Caco-2 (cell line): ENCODE measurements at regions of chr10 and their contacts with region 1.

Region 1: GRCh38 chr10:18607503-18608378 is 43.6 kb downstream of the NSUN6 start:
- DNase-seq: no peak
- H3K4me3 ChIP-seq: no peak overlapping the region
- H3K4me3 Mint-ChIP-seq: no peak overlapping the region
- H3K27ac Mint-ChIP-seq: no peak overlapping the region
- H3K4me1 ChIP-seq: peaks cover 47% of the 10 kb centered on the region
- H3K4me1 Mint-ChIP-seq: peaks cover 54% of the 10 kb centered on the region
- H3K27me3 ChIP-seq: no peaks in the 10 kb centered on the region
- H3K27me3 Mint-ChIP-seq: no peaks in the 10 kb centered on the region
- CTCF ChIP-seq: no peak

Region 2: GRCh38 chr10:18576586-18576985 is 31.2 kb before region 1 on chr10:
- CTCF ChIA-PET with region 1: no interaction called
- POLR2A ChIA-PET with region 1: no interaction called
- intact Hi-C with region 1: no loop called
- DNase-seq: no peak
- H3K4me3 ChIP-seq: no peak overlapping the region
- H3K4me3 Mint-ChIP-seq: no peak overlapping the region
- H3K27ac Mint-ChIP-seq: no peak overlapping the region
- H3K4me1 ChIP-seq: no peaks in the 10 kb centered on the region
- H3K4me1 Mint-ChIP-seq: no peaks in the 10 kb centered on the region
- H3K27me3 ChIP-seq: no peaks in the 10 kb centered on the region
- H3K27me3 Mint-ChIP-seq: no peaks in the 10 kb centered on the region
- CTCF ChIP-seq: no peak

Region 3: DNA sequence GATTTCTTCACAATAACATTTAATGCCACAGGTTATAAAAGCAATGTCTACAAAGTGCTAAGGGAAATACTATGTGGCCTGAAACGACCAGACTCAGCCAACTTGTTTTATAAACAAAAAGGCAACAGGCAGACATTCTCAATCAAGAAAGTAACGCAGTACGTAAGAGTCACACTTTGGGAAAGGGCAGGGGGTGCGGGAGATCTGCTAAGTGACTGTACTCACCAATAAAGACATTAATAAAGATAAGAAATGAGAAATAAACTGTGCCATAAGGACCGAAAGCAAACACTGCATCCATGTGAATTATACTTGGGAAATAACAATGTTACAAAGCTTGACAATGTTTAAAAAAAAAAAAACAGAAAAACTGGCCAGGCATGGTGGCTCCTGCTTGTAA is 18.1 kb after region 1 on chr10:
- CTCF ChIA-PET with region 1: no interaction called
- POLR2A ChIA-PET with region 1: no interaction called
- intact Hi-C with region 1: loop called (anchors 1 kb)
- DNase-seq: no peak
- H3K4me3 ChIP-seq: no peak overlapping the region
- H3K4me3 Mint-ChIP-seq: peak overlapping the region; percentile 54
- H3K27ac Mint-ChIP-seq: peak overlapping the region; percentile 57
- H3K4me1 ChIP-seq: peaks cover 52% of the 10 kb centered on the region
- H3K4me1 Mint-ChIP-seq: peaks cover 64% of the 10 kb centered on the region
- H3K27me3 ChIP-seq: no peaks in the 10 kb centered on the region
- H3K27me3 Mint-ChIP-seq: no peaks in the 10 kb centered on the region
- CTCF ChIP-seq: no peak

Region 4: DNA sequence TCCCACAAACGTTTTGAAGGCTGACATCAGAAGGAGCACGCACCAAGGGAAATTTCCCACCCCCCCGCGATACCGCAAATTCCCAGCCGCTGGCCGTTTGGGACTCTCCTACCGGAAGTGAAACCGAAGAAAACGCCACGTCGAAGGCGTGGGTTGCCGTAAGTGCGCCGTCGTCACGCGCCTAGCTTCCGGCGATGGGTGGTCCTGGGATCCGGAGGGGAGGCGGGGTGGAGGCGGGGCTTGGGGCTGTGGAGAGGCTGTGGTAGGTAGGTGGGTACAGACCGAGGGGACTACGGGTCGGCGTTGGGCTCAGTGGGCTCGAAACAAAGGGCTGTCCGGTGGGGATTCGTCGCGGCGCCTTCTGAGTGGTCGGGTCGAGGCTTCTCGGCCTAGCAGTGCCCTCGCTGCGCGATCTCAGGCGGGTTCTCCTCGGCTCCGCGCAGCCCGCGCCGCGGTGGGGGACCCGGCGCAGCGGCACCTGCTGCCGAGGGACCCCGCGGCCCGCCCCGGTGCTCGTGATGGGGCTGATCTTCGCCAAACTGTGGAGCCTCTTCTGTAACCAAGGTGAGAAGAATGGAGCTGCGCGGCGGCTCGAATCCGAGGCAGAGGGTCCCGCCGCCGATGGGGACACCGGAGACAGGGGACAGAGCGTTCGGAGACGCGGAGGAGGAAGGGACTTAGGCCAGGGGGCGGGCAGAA is 51.5 kb after region 1 on chr10 and contains the start of gene ARL5B:
- CTCF ChIA-PET with region 1: no interaction called
- POLR2A ChIA-PET with region 1: interaction called, 13 read pairs
- intact Hi-C with region 1: loop called (anchors 1 kb)
- DNase-seq: peak; percentile 97 to 99
- H3K4me3 ChIP-seq: peak within 1 kb of the TSS; percentile 82
- H3K4me3 Mint-ChIP-seq: peak within 1 kb of the TSS; percentile 98
- H3K27ac Mint-ChIP-seq: peak within 1 kb of the TSS; percentile 98
- H3K4me1 ChIP-seq: peaks cover 24% of the 10 kb centered on the region
- H3K4me1 Mint-ChIP-seq: peaks cover 13% of the 10 kb centered on the region
- H3K27me3 ChIP-seq: no peaks in the 10 kb centered on the region
- H3K27me3 Mint-ChIP-seq: no peaks in the 10 kb centered on the region
- CTCF ChIP-seq: no peak
- total RNA-seq, gene ARL5B: 61.7 and 65.0 TPM in 2 replicates

Region 5: GRCh38 chr10:18699849-18700840 is 92.4 kb after region 1 on chr10:
- CTCF ChIA-PET with region 1: no interaction called
- POLR2A ChIA-PET with region 1: no interaction called
- intact Hi-C with region 1: no loop called
- DNase-seq: no peak
- H3K4me3 ChIP-seq: no peak overlapping the region
- H3K4me3 Mint-ChIP-seq: no peak overlapping the region
- H3K27ac Mint-ChIP-seq: no peak overlapping the region
- H3K4me1 ChIP-seq: 0 out of 2 replicates have a peak, but pooled peaks cover 6% of the 10 kb centered on the region
- H3K4me1 Mint-ChIP-seq: peaks cover 12% of the 10 kb centered on the region
- H3K27me3 ChIP-seq: no peaks in the 10 kb centered on the region
- H3K27me3 Mint-ChIP-seq: no peaks in the 10 kb centered on the region
- CTCF ChIP-seq: no peak

Region 6: DNA sequence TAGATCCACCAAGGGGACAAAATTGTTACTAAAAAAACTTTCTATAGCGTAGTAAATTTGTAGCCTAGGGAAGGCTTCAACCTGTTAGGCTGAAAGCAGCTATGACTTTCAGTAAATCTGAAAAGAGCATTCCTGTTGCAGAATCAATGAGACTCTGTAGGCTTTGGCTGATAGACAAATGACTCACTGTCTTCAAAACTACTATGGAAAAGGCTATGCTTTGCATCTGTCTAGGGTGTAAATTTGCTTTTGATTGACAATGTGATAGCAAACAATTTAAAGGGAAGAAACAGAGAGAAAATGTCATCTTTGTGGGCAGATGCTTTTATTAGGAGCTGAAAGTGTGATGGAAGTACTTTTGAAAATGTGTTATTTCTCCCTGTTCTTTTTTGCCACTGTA is 112.1 kb after region 1 on chr10:
- CTCF ChIA-PET with region 1: no interaction called
- POLR2A ChIA-PET with region 1: no interaction called
- intact Hi-C with region 1: loop called (anchors 1 kb)
- DNase-seq: no peak
- H3K4me3 ChIP-seq: no peak overlapping the region
- H3K4me3 Mint-ChIP-seq: no peak overlapping the region
- H3K27ac Mint-ChIP-seq: no peak overlapping the region
- H3K4me1 ChIP-seq: peaks cover 9% of the 10 kb centered on the region
- H3K4me1 Mint-ChIP-seq: peaks cover 31% of the 10 kb centered on the region
- H3K27me3 ChIP-seq: no peaks in the 10 kb centered on the region
- H3K27me3 Mint-ChIP-seq: peaks cover 5% of the 10 kb centered on the region
- CTCF ChIP-seq: no peak